GM12878 (cell line): ENCODE measurements at regions of chr16 and their contacts with region 1.

Region 1: GRCh38 chr16:22077700-22078313 is 14.5 kb upstream of the VWA3A start:
- DNase-seq: no peak
- ATAC-seq: peak; percentile 92
- H3K4me3 ChIP-seq: no peak overlapping the region
- H3K27ac ChIP-seq: no peak overlapping the region
- H3K4me1 ChIP-seq: no peaks in the 10 kb centered on the region
- H3K27me3 ChIP-seq: no peaks in the 10 kb centered on the region
- CTCF ChIP-seq: peak; percentile 72 to 85 (median 74)
- EP300 ChIP-seq: no peak; a peak in 1 of 4 replicates
- POLR2A ChIP-seq: no peak
- RAD21 ChIP-seq: peak; percentile 89

Region 2: GRCh38 chr16:21719283-21719682 is 358.5 kb before region 1 on chr16:
- CTCF ChIA-PET with region 1: interaction called, 6 read pairs
- POLR2A ChIA-PET with region 1: no interaction called
- RAD21 ChIA-PET with region 1: no interaction called
- SMC1A ChIA-PET with region 1: interaction called, 14 read pairs
- in situ Hi-C with region 1: no loop called
- intact Hi-C with region 1: no loop called
- DNase-seq: no peak
- ATAC-seq: no peak
- H3K4me3 ChIP-seq: no peak overlapping the region
- H3K27ac ChIP-seq: no peak overlapping the region
- H3K4me1 ChIP-seq: peaks cover 3% of the 10 kb centered on the region
- H3K27me3 ChIP-seq: no peaks in the 10 kb centered on the region
- CTCF ChIP-seq: no peak
- EP300 ChIP-seq: no peak
- POLR2A ChIP-seq: no peak
- RAD21 ChIP-seq: no peak

Region 3: DNA sequence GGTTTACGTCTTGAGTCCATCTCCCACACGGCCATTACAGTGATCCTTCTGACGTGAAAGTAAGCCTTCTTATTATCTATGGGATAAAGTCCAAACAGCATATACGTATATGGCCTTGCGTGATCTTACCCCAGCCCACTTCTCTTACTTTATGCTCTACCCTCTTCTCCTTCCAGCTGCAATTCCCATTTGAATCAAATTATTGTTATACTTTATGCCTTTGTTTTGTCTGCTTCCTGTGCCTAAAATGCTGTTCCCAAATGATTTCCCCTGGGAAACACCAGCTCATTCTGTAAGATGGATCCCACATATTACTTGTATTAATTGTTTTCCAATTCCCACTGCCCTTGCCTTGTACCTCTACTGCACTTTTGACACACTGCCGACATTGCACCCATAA is 113.5 kb before region 1 on chr16:
- CTCF ChIA-PET with region 1: interaction called, 13 read pairs
- POLR2A ChIA-PET with region 1: no interaction called
- RAD21 ChIA-PET with region 1: interaction called, 4 read pairs
- SMC1A ChIA-PET with region 1: interaction called, 4 read pairs
- in situ Hi-C with region 1: no loop called
- intact Hi-C with region 1: no loop called
- DNase-seq: no peak
- ATAC-seq: no peak
- H3K4me3 ChIP-seq: no peak overlapping the region
- H3K27ac ChIP-seq: no peak overlapping the region
- H3K4me1 ChIP-seq: no peaks in the 10 kb centered on the region; the same call in 1 of the 2 replicates
- H3K27me3 ChIP-seq: no peaks in the 10 kb centered on the region
- CTCF ChIP-seq: no peak
- EP300 ChIP-seq: no peak
- POLR2A ChIP-seq: no peak
- RAD21 ChIP-seq: no peak

Region 4: GRCh38 chr16:22014271-22014873 is 63.4 kb before region 1 on chr16:
- CTCF ChIA-PET with region 1: interaction called, 686 read pairs
- POLR2A ChIA-PET with region 1: interaction called, 8 read pairs
- RAD21 ChIA-PET with region 1: interaction called, 466 read pairs
- SMC1A ChIA-PET with region 1: interaction called, 567 read pairs
- in situ Hi-C with region 1: no loop called
- intact Hi-C with region 1: no loop called
- DNase-seq: no peak
- ATAC-seq: peak; percentile 78
- H3K4me3 ChIP-seq: peak overlapping the region; percentile 45; the same call in 1 of the 2 replicates
- H3K27ac ChIP-seq: no peak overlapping the region
- H3K4me1 ChIP-seq: peaks cover 29% of the 10 kb centered on the region
- H3K27me3 ChIP-seq: no peaks in the 10 kb centered on the region
- CTCF ChIP-seq: no peak
- EP300 ChIP-seq: peak in 1 of 2 experiments; percentile 69; a peak in 1 of 4 replicates
- POLR2A ChIP-seq: no peak
- RAD21 ChIP-seq: no peak

Region 5: DNA sequence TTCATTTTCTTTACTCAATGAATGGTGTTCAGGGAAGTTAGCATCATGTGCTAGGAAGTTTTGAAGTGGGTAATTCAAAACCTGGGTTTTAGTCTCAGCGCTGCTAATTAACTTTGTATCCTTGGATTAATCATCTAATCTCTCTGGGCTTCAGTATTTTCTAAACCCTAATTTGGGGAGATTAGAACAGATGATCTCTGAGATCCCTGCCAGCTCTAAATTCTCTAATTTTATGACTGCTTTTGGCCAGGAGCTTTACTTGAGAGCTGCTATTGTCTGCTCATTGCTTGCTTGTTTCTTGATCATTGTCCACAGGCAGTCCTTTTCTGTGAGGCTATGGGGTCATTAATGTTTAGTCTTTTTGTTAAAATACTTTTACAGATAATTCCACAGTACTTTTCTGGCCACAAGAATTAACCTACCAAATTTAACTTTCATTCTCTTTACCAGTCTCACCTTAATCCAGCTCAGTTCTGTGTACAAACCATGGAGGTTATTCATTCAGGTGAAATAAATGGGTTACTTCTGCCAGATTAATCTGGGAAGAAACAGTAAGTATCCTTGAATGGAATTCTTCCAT is 13.8 kb before region 1 on chr16:
- CTCF ChIA-PET with region 1: interaction called, 54 read pairs
- POLR2A ChIA-PET with region 1: interaction called, 5 read pairs
- RAD21 ChIA-PET with region 1: interaction called, 10 read pairs
- SMC1A ChIA-PET with region 1: interaction called, 50 read pairs
- in situ Hi-C with region 1: no loop called
- intact Hi-C with region 1: no loop called
- DNase-seq: no peak
- ATAC-seq: no peak
- H3K4me3 ChIP-seq: no peak overlapping the region
- H3K27ac ChIP-seq: no peak overlapping the region
- H3K4me1 ChIP-seq: no peaks in the 10 kb centered on the region
- H3K27me3 ChIP-seq: no peaks in the 10 kb centered on the region
- CTCF ChIP-seq: no peak
- EP300 ChIP-seq: no peak
- POLR2A ChIP-seq: no peak
- RAD21 ChIP-seq: no peak

Region 6: GRCh38 chr16:22117609-22118008 is 39.8 kb after region 1 on chr16:
- CTCF ChIA-PET with region 1: interaction called, 10 read pairs
- POLR2A ChIA-PET with region 1: no interaction called
- RAD21 ChIA-PET with region 1: interaction called, 4 read pairs
- SMC1A ChIA-PET with region 1: interaction called, 5 read pairs
- in situ Hi-C with region 1: no loop called
- intact Hi-C with region 1: no loop called
- DNase-seq: no peak
- ATAC-seq: no peak
- H3K4me3 ChIP-seq: no peak overlapping the region
- H3K27ac ChIP-seq: no peak overlapping the region
- H3K4me1 ChIP-seq: no peaks in the 10 kb centered on the region
- H3K27me3 ChIP-seq: no peaks in the 10 kb centered on the region
- CTCF ChIP-seq: no peak
- EP300 ChIP-seq: no peak
- POLR2A ChIP-seq: no peak
- RAD21 ChIP-seq: no peak

Region 7: DNA sequence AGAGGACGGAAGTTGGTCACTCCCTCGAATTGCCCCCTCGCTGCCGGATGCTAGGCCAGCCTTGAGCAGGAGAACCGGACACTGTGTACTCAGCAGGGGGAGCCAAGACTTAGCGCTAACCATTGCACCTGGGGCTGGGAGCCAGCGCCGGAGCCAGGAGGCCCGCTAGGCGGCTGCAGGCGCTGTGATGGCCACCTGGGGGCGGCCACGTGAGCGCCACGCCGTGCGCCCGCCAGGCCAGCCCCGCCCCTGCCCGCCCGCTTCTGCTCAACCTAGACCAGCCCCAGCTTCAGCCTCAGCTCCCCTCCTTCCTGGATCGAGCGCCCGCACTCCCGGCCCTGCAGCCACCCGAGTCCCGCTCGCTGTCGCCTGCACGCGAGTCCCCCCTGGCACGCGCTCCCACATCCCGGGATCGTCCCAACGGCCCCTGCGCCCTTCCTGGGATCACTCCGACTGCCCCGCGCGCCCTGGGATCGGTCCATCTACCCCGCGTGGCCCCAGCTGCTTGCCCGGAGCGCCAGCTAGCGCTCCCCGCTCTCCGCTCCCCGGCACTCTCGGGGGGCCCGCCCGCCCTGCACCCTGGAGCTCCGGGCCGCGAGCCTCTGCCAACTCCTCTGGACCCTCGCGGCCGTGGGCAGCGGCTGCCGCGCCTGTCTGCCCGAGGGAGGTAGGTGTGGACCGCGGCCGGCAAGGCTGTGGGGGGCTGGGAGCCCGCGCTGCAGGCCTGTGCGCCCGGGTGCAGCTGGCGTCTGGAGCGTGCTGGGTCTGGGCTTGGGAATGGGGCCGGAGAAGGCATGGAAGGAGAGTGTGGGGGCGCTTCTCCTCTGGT is 128.4 kb after region 1 on chr16 and contains the start of gene EEF2K:
- CTCF ChIA-PET with region 1: no interaction called
- POLR2A ChIA-PET with region 1: no interaction called
- RAD21 ChIA-PET with region 1: no interaction called
- SMC1A ChIA-PET with region 1: no interaction called
- in situ Hi-C with region 1: no loop called
- intact Hi-C with region 1: no loop called
- DNase-seq: peak; percentile 83
- ATAC-seq: peak; percentile 92
- H3K4me3 ChIP-seq: peak within 1 kb of the TSS; percentile 88
- H3K27ac ChIP-seq: peak within 1 kb of the TSS; percentile 65
- H3K4me1 ChIP-seq: peaks cover 11% of the 10 kb centered on the region
- H3K27me3 ChIP-seq: no peaks in the 10 kb centered on the region
- CTCF ChIP-seq: peak; percentile 76 to 93 (median 76)
- EP300 ChIP-seq: peak; percentile 28 to 37; a peak in 2 of 4 replicates
- POLR2A ChIP-seq: peak; percentile 81
- RAD21 ChIP-seq: peak; percentile 59
- polyA plus RNA-seq, gene EEF2K: 2.0 to 2.4 TPM

Region 8: DNA sequence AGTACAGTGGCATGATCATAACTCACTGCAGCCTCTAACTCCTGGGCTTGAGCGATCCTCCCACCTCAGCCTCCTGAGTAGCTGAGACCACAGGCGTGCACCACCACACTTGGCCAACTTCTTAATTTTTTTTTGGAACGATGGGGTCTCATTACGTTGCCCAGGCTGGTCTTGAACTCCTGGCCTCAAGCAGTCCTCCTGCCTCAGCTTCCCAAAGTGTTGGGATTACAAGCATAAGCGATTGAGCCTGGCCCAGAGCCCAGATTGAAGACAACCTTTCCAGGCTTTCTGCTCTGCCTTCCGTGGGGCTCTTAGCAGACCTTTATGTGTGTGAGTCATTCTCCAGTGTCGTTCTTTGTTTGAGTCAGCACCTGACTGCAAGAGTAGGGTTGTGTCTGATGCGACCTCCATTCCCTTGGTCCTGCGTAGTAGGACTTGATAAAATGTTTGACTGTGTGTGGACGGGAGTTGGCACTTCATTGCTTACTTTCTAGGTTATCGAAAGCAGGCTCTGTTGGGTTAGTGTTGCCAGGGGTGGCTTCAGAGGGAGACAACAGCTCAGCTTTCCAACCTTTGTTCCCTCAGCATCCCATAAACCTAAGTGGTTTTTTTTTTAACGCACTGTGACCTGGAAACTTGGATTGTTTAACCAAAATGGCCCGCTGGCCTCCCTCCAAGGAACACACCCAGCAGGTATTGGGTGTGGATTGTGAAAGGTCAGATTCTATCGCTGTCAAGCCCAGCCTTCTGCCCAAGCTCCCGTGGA is 154.7 kb after region 1 on chr16:
- CTCF ChIA-PET with region 1: no interaction called
- POLR2A ChIA-PET with region 1: no interaction called
- RAD21 ChIA-PET with region 1: no interaction called
- SMC1A ChIA-PET with region 1: no interaction called
- in situ Hi-C with region 1: no loop called
- intact Hi-C with region 1: no loop called
- DNase-seq: no peak
- ATAC-seq: no peak
- H3K4me3 ChIP-seq: no peak overlapping the region
- H3K27ac ChIP-seq: no peak overlapping the region
- H3K4me1 ChIP-seq: no peaks in the 10 kb centered on the region
- H3K27me3 ChIP-seq: no peaks in the 10 kb centered on the region
- CTCF ChIP-seq: no peak
- EP300 ChIP-seq: no peak
- POLR2A ChIP-seq: no peak
- RAD21 ChIP-seq: no peak